A673 (cell line): ENCODE measurements at regions of chr6 and their contacts with region 1.

Region 1: DNA sequence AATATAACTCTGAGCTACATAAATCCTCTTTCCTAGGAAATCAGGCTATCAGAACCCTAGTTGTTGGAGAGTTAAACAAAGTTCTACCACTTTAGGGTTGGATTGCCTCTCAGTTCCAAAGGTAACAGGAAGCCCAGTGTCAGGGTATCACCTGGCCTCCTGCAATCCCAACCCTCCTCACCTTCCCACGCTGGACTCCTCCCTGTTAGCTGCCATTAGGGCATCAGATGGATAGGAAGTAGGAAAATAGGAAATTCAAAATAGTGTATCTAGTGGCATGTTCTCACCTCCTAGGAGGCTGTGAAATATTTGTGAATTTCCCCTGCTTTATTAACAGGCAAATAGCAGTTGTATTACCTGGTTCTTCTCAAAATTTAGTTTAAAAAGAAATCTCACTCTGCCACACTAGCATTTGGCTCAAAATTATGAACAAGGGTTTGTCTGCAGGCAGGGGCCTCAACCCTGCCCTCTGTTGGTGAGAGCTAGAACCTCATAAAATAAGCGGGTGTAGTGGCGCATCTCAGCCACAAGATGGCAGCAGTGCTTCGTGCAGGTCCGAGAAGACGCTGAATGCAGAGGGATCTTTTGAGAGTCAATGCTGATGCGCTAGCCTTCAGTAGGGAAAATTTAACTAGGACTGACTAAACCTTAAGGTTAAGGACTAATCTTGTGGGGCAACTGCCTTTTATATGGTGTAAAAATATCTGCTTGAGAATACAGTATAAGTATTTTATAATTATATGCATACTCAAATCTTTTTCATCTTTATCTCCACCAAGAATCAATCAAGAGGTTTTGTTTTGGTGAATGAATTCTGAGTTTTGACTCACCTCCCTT is 209.8 kb upstream of the KCNQ5 start:
- DNase-seq: peak; percentile 85
- H3K4me3 ChIP-seq: no peak overlapping the region
- H3K27ac ChIP-seq: no peak overlapping the region
- H3K4me1 ChIP-seq: no peaks in the 10 kb centered on the region
- H3K27me3 ChIP-seq: no peaks in the 10 kb centered on the region
- CTCF ChIP-seq: peak; percentile 100

Region 2: DNA sequence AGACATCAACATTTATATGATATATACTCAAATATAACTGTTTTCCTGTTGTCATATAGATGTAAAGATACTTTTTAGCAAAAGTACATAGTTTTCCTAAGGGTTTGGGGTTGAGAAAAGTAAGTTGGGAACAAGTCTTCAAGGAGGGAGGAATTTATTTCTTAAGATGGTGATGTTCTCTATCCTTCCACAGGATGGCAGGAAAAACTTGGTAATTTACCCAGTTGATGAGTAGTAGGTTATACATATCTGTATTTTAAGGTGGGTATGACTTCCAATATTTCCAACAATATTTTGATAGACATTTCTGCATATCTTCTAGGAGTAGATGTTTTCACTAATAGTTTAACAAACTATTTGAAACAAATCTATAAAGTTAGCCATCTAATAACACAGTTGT is 271.3 kb before region 1 on chr6:
- CTCF ChIA-PET with region 1: no interaction called
- POLR2A ChIA-PET with region 1: no interaction called
- intact Hi-C with region 1: loop called (anchors 5 kb)
- DNase-seq: peak; percentile 31
- H3K4me3 ChIP-seq: no peak overlapping the region
- H3K27ac ChIP-seq: no peak overlapping the region
- H3K4me1 ChIP-seq: no peaks in the 10 kb centered on the region
- H3K27me3 ChIP-seq: no peaks in the 10 kb centered on the region
- CTCF ChIP-seq: no peak; the same call in 1 of the 2 replicates

Region 3: DNA sequence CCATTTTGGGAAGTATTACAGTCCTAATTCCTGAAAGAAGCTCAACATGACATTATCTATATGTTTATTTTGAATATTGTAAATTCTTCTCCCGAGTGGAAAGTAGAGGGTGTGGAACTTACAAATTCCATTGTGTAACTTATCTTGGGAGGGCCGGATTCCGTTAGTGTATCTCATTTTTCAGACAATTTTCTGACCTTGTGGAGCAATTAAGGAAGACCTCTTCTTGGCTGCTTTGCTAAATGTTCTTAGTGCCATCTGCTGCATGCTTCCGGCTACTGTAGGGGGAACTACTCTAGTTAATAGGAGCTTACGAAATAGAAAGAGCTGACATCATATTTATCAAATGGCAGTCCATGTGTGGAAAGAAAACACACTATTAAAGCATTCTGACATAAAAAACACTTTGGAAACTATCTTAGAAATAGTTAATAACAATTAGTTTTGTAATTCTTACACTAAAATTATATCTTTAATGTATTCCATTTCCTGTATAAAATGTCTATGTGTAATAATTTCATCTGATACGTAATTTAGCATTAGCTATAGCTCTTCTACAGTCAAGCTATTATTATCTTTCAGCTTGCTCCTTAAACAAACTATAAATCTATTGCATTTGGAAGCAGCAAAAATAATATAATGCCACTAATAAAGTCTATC is 168.3 kb after region 1 on chr6:
- CTCF ChIA-PET with region 1: interaction called, 16 read pairs
- POLR2A ChIA-PET with region 1: no interaction called
- intact Hi-C with region 1: loop called (anchors 5 kb)
- DNase-seq: peak; percentile 86
- H3K4me3 ChIP-seq: no peak overlapping the region
- H3K27ac ChIP-seq: no peak overlapping the region
- H3K4me1 ChIP-seq: no peaks in the 10 kb centered on the region
- H3K27me3 ChIP-seq: no peaks in the 10 kb centered on the region
- CTCF ChIP-seq: peak; percentile 74

Region 4: GRCh38 chr6:73180763-73181619 is 768.9 kb after region 1 on chr6:
- CTCF ChIA-PET with region 1: interaction called, 4 read pairs
- POLR2A ChIA-PET with region 1: no interaction called
- intact Hi-C with region 1: loop called (anchors 1 kb)
- DNase-seq: peak; percentile 86
- H3K4me3 ChIP-seq: peak overlapping the region; percentile 35
- H3K27ac ChIP-seq: peak overlapping the region; percentile 25
- H3K4me1 ChIP-seq: peaks cover 22% of the 10 kb centered on the region
- H3K27me3 ChIP-seq: no peaks in the 10 kb centered on the region
- CTCF ChIP-seq: peak; percentile 93

Region 5: DNA sequence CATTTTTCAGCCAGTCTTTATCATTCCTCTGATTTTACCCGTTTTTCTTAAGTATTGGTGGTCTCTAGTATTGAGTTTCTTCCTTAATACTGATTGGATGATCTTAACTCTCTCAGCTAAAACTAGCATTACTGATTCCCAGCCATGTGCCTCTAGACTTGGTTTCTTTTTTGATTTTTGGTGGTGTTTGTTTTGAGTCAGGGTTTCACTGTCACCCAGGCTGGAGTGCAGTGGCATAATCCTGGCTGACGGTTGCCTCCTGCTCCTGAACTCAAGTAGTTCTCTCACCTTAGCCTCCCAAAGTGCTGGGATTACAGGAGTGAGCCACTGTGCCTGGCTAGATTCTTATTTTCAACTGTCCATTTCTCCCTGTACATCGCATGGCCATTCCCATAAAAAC is 917.1 kb after region 1 on chr6:
- CTCF ChIA-PET with region 1: no interaction called
- POLR2A ChIA-PET with region 1: no interaction called
- intact Hi-C with region 1: loop called (anchors 5 kb)
- DNase-seq: no peak
- H3K4me3 ChIP-seq: no peak overlapping the region
- H3K27ac ChIP-seq: no peak overlapping the region
- H3K4me1 ChIP-seq: no peaks in the 10 kb centered on the region
- H3K27me3 ChIP-seq: no peaks in the 10 kb centered on the region
- CTCF ChIP-seq: no peak